AG04450 (cell line): ENCODE measurements at regions of chr3 and their contacts with region 1.

Region 1: DNA sequence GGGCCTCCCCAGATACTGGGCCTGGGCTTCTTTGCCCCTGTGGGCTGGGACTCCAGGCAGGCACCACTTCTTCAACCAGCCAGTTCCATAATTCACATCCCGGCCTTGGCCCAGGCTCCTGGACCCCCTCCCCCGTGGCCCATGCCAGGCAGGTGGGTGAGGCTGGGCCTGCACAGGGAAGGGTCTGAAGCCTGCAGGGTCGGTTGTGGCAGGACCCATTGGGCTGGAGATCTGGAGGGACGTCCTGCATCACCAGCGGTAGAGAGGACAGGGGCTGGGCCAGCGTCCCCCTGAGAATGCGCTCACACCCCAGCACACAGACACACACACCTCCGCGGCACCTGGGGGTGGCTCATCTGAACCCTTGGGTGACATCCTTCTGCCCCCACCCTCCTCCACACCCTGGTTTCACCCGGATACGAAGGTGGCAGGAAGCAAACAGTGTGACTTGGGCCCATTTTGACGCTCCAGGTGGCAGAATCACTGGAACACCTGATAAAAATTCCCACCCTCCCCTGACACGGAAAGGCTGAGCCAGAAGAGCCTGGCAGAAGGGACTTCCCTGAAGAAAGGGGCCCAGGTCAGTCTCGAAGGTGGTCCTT is 15.4 kb downstream of the ZDHHC19 start:
- DNase-seq: no peak
- H3K4me3 ChIP-seq: no peak overlapping the region
- H3K27ac ChIP-seq: no peak overlapping the region
- H3K27me3 ChIP-seq: no peaks in the 10 kb centered on the region
- CTCF ChIP-seq: no peak

Region 2: GRCh38 chr3:195692354-195692685 is 503.4 kb before region 1 on chr3:
- CTCF ChIA-PET with region 1: no interaction called
- POLR2A ChIA-PET with region 1: no interaction called
- DNase-seq: no peak
- H3K4me3 ChIP-seq: no peak overlapping the region
- H3K27ac ChIP-seq: no peak overlapping the region
- H3K27me3 ChIP-seq: no peaks in the 10 kb centered on the region
- CTCF ChIP-seq: no peak

Region 3: DNA sequence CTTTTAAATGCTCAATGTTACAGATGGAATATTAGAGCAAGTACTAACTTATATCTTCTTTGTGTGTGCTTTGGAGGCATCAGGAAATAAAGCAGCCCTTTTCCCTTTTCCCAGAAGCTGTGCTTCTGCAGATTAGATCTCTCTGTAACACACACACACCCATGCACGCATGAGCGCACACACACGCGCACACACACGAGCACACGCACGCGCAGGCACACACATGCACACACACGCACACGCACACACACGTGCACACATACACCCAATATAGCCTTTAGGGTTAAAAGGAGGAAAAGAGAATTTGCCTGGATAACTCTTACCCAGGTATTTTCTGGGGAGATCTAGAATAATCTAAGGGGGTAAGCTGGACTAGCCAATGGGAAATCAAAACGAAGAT is 170.8 kb before region 1 on chr3:
- CTCF ChIA-PET with region 1: interaction called, 12 read pairs
- POLR2A ChIA-PET with region 1: no interaction called
- DNase-seq: no peak
- H3K4me3 ChIP-seq: no peak overlapping the region
- H3K27ac ChIP-seq: no peak overlapping the region
- H3K27me3 ChIP-seq: peaks cover 19% of the 10 kb centered on the region
- CTCF ChIP-seq: no peak

Region 4: GRCh38 chr3:196080982-196081790 is 114.6 kb before region 1 on chr3:
- CTCF ChIA-PET with region 1: interaction called, 185 read pairs
- POLR2A ChIA-PET with region 1: no interaction called
- DNase-seq: no peak
- H3K4me3 ChIP-seq: peak overlapping the region; percentile 94
- H3K27ac ChIP-seq: peak overlapping the region; percentile 75
- H3K27me3 ChIP-seq: peaks cover 2% of the 10 kb centered on the region
- CTCF ChIP-seq: no peak

Region 5: GRCh38 chr3:196144706-196145105 is 51.1 kb before region 1 on chr3:
- CTCF ChIA-PET with region 1: no interaction called
- POLR2A ChIA-PET with region 1: no interaction called
- DNase-seq: peak; percentile 42
- H3K4me3 ChIP-seq: no peak overlapping the region
- H3K27ac ChIP-seq: peak overlapping the region; percentile 31
- H3K27me3 ChIP-seq: no peaks in the 10 kb centered on the region
- CTCF ChIP-seq: no peak